H1 (cell line): ENCODE measurements at regions of chr16 and their contacts with region 1.

Region 1: GRCh38 chr16:19886073-19886941 is 1.7 kb upstream of the GPRC5B start:
- DNase-seq: peak; percentile 68 to 94
- H3K4me3 ChIP-seq: no peak overlapping the region
- H3K27ac ChIP-seq: no peak overlapping the region
- H3K4me1 ChIP-seq: peaks cover 0 to 12% (median 10%) of the 10 kb centered on the region in 4 experiments; a peak in 6 of 7 replicates
- H3K27me3 ChIP-seq: peaks cover 0 to 11% (median 7%) of the 10 kb centered on the region in 4 experiments; a peak in 5 of 7 replicates
- CTCF ChIP-seq: peak; percentile 91 to 100 (median 100)
- EP300 ChIP-seq: no peak
- POLR2A ChIP-seq: no peak
- RAD21 ChIP-seq: peak; percentile 100

Region 2: DNA sequence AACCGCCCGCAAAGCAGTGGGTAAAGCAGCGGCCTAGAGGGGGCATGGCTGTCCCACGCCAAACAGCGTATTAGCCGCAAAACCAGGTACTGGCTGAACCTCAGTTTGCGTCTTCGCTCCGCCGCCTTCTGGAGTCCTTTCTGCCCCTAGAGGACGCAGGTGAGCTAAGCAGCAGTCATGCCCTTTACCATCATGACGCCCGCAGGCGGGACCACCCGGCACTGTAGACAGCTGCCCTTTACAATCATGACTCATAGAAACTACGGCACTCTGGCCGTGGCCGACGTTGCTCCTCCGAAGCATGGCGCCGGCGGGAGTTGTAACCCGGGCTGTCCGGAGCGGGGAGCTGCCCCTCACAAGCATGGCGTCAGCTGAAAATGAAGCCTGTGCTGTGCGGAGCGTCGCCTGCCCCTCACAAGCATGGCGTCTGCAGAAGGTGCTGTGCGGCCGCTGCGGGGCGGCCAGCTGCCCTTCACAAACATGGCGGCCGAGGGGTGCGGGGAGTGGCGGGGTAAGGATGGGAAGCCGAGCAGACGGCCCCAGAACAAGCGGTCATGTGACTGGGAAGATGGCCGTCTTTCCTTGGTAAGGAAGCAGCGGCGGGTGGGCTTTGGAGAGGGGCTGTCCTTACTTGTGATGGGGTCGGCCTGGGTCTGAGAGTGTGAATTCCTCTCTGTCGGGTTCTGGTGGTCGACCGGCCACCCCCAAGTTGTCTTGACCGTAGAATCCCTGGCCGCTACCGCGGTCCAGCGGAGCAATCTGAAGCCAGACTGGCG is 331.0 kb before region 1 on chr16 and contains the start of gene VPS35L:
- CTCF ChIA-PET with region 1: interaction called, 10 read pairs
- POLR2A ChIA-PET with region 1: interaction called, 11 read pairs
- DNase-seq: peak; percentile 97 to 99
- H3K4me3 ChIP-seq: peak within 1 kb of the TSS; percentile 84 to 97 (median 91)
- H3K27ac ChIP-seq: peak within 1 kb of the TSS; percentile 96
- H3K4me1 ChIP-seq: peaks cover 0 to 6% (median 3%) of the 10 kb centered on the region in 4 experiments; a peak in 4 of 7 replicates
- H3K27me3 ChIP-seq: no peaks in the 10 kb centered on the region
- CTCF ChIP-seq: peak; percentile 82 to 90 (median 84)
- EP300 ChIP-seq: no peak; a peak in 1 of 3 replicates
- POLR2A ChIP-seq: peak; percentile 66 to 69
- RAD21 ChIP-seq: peak; percentile 35 to 45; a peak in 3 of 4 replicates
- total RNA-seq, gene VPS35L: 55.1 and 57.1 TPM in 2 replicates

Region 3: DNA sequence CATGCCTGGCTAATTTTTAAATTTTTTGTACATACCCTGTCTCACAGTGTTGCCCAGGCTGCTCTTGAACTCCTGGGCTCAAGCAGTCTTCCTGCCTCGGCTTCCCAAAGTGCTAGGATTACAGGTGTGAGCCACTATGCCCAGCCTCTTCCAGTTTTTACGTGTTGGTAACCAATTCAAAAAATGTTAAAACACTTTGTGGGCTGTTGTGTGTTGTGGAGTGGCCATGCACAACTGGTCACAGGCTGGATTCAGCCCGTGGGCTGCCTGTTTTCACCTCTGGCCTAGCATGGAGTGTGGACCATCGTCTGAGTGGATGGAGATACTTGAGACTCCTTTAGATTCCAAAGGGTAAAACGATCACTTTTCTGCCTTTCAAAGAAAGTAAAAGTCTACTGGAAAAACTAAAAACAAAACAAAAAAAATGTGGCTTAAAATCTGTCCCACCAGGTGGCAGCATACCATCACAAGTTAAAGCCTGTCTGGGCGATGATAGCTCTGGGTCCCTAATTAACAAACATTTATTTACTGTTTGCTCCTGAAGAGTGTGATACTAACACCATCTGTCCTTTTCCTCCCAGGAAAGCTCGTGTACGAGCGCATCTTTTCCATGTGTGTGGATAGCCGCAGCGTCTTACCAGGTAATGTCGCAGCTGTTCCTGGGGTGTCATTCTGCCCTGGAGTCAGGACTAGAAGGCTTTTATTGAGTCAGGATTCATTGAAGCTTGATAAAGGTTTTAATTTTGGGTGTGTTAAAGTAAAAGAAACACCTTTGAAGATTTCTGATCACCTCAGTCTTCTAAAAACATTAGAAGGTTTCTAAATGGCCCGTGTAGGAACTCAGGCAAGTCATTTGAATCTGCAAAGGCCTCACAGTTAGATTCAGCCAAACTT is 285.0 kb before region 1 on chr16:
- CTCF ChIA-PET with region 1: interaction called, 57 read pairs
- POLR2A ChIA-PET with region 1: interaction called, 5 read pairs
- DNase-seq: peak in 1 of 2 experiments; percentile 56
- H3K4me3 ChIP-seq: no peak overlapping the region
- H3K27ac ChIP-seq: no peak overlapping the region
- H3K4me1 ChIP-seq: peaks cover 0 to 4% (median 2%) of the 10 kb centered on the region in 4 experiments; a peak in 3 of 7 replicates
- H3K27me3 ChIP-seq: no peaks in the 10 kb centered on the region
- CTCF ChIP-seq: peak in 2 of 3 experiments; percentile 51; a peak in 3 of 4 replicates
- EP300 ChIP-seq: no peak
- POLR2A ChIP-seq: no peak
- RAD21 ChIP-seq: peak; percentile 79 to 87

Region 4: GRCh38 chr16:19822533-19822932 is 63.8 kb before region 1 on chr16:
- CTCF ChIA-PET with region 1: no interaction called
- POLR2A ChIA-PET with region 1: no interaction called
- DNase-seq: no peak
- H3K4me3 ChIP-seq: no peak overlapping the region
- H3K27ac ChIP-seq: no peak overlapping the region
- H3K4me1 ChIP-seq: no peaks in the 10 kb centered on the region
- H3K27me3 ChIP-seq: no peaks in the 10 kb centered on the region
- CTCF ChIP-seq: no peak
- EP300 ChIP-seq: no peak
- POLR2A ChIP-seq: no peak
- RAD21 ChIP-seq: no peak

Region 5: DNA sequence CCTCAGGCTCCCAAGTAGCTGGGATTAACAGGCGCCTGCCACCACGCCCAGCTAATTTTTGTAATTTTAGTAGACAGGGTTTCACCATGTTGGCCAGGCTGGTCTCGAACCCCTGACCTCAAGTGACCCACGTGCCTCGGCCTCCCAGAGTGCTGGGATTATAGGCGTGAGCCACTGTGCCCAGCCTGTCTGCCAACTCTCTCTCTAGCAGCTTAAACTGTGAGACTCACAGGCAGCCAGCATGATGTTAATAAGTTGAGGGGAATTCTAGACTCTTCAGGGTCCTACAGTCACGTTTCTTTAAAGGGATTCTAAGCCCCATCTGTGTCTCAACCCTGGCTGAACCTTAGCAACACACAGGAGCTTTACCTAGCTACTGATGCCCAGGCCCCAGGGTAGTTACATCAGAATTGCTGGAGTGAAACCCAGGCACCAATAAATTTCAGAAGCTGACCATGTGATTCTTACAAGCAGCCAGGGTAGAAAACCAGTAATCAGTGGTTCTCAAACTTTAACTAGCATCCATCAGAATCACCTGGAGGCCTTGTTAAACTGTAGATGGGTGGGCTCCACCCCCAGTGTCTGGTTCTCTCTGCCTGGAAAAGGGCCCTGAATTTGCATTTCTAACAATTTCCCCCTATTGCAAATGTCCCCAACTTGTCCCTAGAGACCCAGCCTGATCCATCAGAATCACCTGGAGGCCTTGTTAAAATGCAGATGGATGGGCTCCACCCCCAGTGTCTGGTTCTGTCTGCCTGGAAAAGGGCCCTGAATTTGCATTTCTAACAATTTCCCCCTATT is 32.4 kb before region 1 on chr16:
- CTCF ChIA-PET with region 1: interaction called, 6 read pairs
- POLR2A ChIA-PET with region 1: interaction called, 28 read pairs
- DNase-seq: no peak
- H3K4me3 ChIP-seq: no peak overlapping the region
- H3K27ac ChIP-seq: no peak overlapping the region
- H3K4me1 ChIP-seq: peaks cover 7 to 37% (median 29%) of the 10 kb centered on the region in 4 experiments
- H3K27me3 ChIP-seq: no peaks in the 10 kb centered on the region
- CTCF ChIP-seq: no peak
- EP300 ChIP-seq: no peak
- POLR2A ChIP-seq: no peak
- RAD21 ChIP-seq: no peak

Region 6: DNA sequence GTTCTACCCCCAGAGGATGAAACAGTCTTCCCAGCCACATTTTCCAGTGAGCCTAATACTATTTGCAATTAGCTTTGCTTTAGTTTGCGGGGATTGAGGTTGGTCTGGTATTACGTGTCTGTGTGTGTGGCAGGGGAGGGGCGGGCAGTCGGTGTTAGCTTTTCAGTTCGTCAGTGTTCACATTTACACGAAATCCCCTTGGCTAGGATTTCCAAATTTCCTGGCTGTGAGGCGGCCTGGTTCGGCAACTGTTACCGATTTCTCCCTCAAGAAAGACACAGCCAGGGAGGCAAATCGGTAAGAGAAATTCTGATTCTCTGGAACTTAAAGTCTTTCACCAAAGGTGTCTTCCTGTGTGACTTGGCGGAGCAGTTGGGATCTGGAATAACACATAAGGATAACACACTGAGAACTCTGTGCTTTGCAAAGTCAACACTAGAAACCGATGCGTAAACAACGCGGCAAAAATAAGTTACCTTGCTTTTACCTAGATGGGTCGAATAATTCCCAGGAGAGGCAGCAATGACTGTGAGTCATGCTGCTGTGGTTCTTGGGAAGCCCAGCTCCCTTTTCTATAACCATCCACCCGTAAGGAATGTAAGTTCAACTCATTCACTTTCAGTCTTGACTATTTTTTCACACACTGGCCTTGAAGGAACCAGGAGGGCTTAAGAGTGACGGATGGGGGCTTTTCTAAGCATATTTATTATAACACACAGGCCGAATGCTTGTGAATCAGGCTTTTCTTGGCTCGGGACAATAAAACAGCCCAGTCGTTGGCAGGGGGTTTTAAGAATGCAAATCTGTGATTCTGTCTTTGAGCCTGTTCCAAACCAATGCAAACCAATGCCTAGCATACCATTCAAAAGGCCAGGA is 25.9 kb before region 1 on chr16:
- CTCF ChIA-PET with region 1: interaction called, 4 read pairs
- POLR2A ChIA-PET with region 1: interaction called, 28 read pairs
- DNase-seq: peak in 1 of 2 experiments; percentile 78
- H3K4me3 ChIP-seq: peak overlapping the region in 3 of 4 experiments; percentile 8 to 49 (median 18); a peak in 4 of 8 replicates
- H3K27ac ChIP-seq: peak overlapping the region; percentile 83
- H3K4me1 ChIP-seq: peaks cover 18 to 47% (median 40%) of the 10 kb centered on the region in 4 experiments
- H3K27me3 ChIP-seq: no peaks in the 10 kb centered on the region
- CTCF ChIP-seq: no peak
- EP300 ChIP-seq: no peak
- POLR2A ChIP-seq: no peak; a peak in 1 of 3 replicates
- RAD21 ChIP-seq: no peak